ENCODE measurements at regions of chr1 and their contacts with region 1.

Region 1: DNA sequence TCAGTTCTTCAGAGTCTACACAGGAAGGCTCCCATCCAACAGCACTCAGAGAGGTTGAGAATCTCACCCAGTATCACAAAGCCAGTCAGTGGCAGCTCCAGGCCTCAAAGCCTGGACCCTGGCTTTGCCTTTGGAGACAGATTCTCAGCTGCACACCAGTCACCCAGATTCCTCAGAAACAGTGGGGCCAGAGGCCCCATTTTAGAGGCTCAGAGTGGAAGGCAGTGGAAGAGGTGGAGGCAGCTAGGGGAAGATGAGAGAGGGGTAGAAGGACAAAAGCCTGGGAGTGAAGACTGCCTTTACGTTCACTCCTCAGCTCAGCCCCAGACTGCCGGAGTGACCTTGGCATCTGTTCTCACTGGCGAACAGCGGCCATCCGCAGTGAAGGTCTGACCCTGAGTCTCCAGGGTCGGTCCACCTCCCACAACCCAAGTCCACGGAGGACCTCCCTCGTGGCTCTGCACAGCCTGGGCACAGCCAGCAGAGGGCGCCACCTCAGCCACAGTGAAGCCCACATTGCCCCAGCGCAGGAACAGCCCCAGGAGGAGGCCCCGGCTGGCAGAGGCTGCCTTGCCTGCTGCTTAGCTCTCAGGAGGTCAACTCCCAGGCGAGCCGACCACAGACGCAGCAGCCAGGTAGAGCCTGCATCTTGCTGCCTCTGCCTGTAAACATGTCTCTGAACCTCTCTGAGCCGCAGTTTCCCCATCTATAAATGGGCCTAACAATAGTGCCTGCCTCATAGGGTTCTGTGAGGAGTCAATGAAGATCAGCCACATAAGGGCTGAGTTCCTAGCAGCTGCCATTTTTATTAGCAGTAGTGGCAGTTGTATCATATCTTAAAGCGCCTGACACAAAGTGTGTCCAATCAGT is 5.9 kb upstream of the FNDC5 start:
- DNase-seq: no peak
- ATAC-seq: peak; percentile 90
- H3K4me3 ChIP-seq: no peak overlapping the region
- H3K27ac ChIP-seq: no peak overlapping the region
- H3K4me1 ChIP-seq: peaks cover 10% of the 10 kb centered on the region
- H3K27me3 ChIP-seq: peaks cover 5% of the 10 kb centered on the region in 2 experiments; a peak in 2 of 4 replicates
- CTCF ChIP-seq: peak; percentile 79 to 98 (median 95)
- EP300 ChIP-seq: no peak
- POLR2A ChIP-seq: no peak
- RAD21 ChIP-seq: peak; percentile 51; the same call in 1 of the 2 replicates

Region 2: GRCh38 chr1:32431736-32432400 is 444.7 kb before region 1 on chr1:
- CTCF ChIA-PET with region 1: no interaction called
- POLR2A ChIA-PET with region 1: no interaction called
- RAD21 ChIA-PET with region 1: no interaction called
- SMC1A ChIA-PET with region 1: no interaction called
- in situ Hi-C with region 1: no loop called
- intact Hi-C with region 1: no loop called
- DNase-seq: peak; percentile 55
- ATAC-seq: peak; percentile 99
- H3K4me3 ChIP-seq: no peak overlapping the region
- H3K27ac ChIP-seq: 0 out of 2 replicates have a peak overlapping the region, but pooled peaks have one; percentile 50
- H3K4me1 ChIP-seq: peaks cover 4% of the 10 kb centered on the region
- H3K27me3 ChIP-seq: no peaks in the 10 kb centered on the region; a peak in 1 of 4 replicates
- CTCF ChIP-seq: no peak
- EP300 ChIP-seq: no peak
- POLR2A ChIP-seq: no peak
- RAD21 ChIP-seq: no peak

Region 3: GRCh38 chr1:32716312-32717148 is 160.0 kb before region 1 on chr1:
- CTCF ChIA-PET with region 1: interaction called, 57 read pairs
- POLR2A ChIA-PET with region 1: interaction called, 4 read pairs
- RAD21 ChIA-PET with region 1: interaction called, 34 read pairs
- SMC1A ChIA-PET with region 1: interaction called, 16 read pairs
- in situ Hi-C with region 1: no loop called
- intact Hi-C with region 1: loop called (anchors 1 kb)
- DNase-seq: no peak
- ATAC-seq: peak; percentile 87
- H3K4me3 ChIP-seq: no peak overlapping the region
- H3K27ac ChIP-seq: no peak overlapping the region
- H3K4me1 ChIP-seq: 0 out of 2 replicates have a peak, but pooled peaks cover 4% of the 10 kb centered on the region
- H3K27me3 ChIP-seq: no peaks in the 10 kb centered on the region
- CTCF ChIP-seq: no peak
- EP300 ChIP-seq: no peak
- POLR2A ChIP-seq: no peak
- RAD21 ChIP-seq: no peak

Region 4: GRCh38 chr1:32828341-32828740 is 48.2 kb before region 1 on chr1:
- CTCF ChIA-PET with region 1: interaction called, 23 read pairs
- POLR2A ChIA-PET with region 1: no interaction called
- RAD21 ChIA-PET with region 1: no interaction called
- SMC1A ChIA-PET with region 1: interaction called, 4 read pairs
- in situ Hi-C with region 1: no loop called
- intact Hi-C with region 1: no loop called
- DNase-seq: no peak
- ATAC-seq: no peak
- H3K4me3 ChIP-seq: no peak overlapping the region
- H3K27ac ChIP-seq: no peak overlapping the region
- H3K4me1 ChIP-seq: no peaks in the 10 kb centered on the region
- H3K27me3 ChIP-seq: no peaks in the 10 kb centered on the region
- CTCF ChIP-seq: peak in 1 of 3 experiments; percentile 20; a peak in 1 of 6 replicates
- EP300 ChIP-seq: no peak
- POLR2A ChIP-seq: no peak
- RAD21 ChIP-seq: 0 out of 2 replicates have a peak, but pooled peaks have one; percentile 18

Region 5: GRCh38 chr1:32861904-32862695 is 14.5 kb before region 1 on chr1:
- CTCF ChIA-PET with region 1: interaction called, 37 read pairs
- POLR2A ChIA-PET with region 1: interaction called, 3 read pairs
- RAD21 ChIA-PET with region 1: no interaction called
- SMC1A ChIA-PET with region 1: interaction called, 13 read pairs
- in situ Hi-C with region 1: no loop called
- intact Hi-C with region 1: no loop called
- DNase-seq: no peak
- ATAC-seq: no peak
- H3K4me3 ChIP-seq: no peak overlapping the region
- H3K27ac ChIP-seq: no peak overlapping the region
- H3K4me1 ChIP-seq: no peaks in the 10 kb centered on the region
- H3K27me3 ChIP-seq: no peaks in the 10 kb centered on the region
- CTCF ChIP-seq: no peak
- EP300 ChIP-seq: no peak
- POLR2A ChIP-seq: no peak
- RAD21 ChIP-seq: no peak

Region 6: DNA sequence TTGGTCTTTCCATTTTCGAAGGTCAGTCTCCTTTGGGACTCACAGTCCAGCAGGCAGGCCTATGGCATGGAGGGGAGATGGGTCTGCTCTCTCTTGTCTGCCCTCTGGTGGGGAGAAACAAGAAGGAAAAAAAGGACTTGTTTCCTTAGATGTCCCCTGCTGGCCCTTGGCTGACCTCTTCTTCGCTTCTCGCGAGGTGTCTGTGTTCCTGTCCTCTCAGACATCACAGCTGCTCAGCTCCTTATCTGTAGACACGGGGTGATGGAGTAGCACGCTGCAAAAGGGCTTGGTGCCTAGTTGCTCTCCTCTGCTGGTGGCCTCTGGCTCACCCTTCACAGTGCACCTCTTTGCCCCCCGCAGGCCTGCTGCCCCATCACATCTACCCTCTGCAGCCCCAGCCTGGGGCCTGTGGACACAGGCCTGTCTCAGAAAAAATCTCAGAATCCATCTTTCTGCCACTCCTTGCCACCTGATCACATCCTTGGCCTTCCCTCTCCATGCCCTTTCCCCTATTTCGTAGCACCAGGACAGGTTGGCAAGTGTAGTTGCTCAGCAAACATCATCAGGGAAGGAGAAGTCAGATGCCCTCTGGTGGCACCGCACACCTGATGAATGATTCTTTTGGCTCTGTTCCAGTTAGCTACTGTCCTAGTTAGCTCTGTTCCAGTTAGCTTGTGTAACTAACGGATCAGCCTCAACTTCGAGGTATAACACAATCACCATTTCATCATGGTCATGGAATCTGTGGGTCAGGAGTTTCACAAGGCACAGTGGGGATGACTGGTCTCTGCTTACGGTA is 178.8 kb after region 1 on chr1:
- CTCF ChIA-PET with region 1: interaction called, 19 read pairs
- POLR2A ChIA-PET with region 1: no interaction called
- RAD21 ChIA-PET with region 1: interaction called, 3 read pairs
- SMC1A ChIA-PET with region 1: interaction called, 5 read pairs
- in situ Hi-C with region 1: no loop called
- intact Hi-C with region 1: no loop called
- DNase-seq: peak; percentile 15
- ATAC-seq: peak; percentile 91
- H3K4me3 ChIP-seq: no peak overlapping the region
- H3K27ac ChIP-seq: no peak overlapping the region
- H3K4me1 ChIP-seq: peaks cover 9% of the 10 kb centered on the region
- H3K27me3 ChIP-seq: no peaks in the 10 kb centered on the region
- CTCF ChIP-seq: peak; percentile 67 to 74 (median 74)
- EP300 ChIP-seq: no peak
- POLR2A ChIP-seq: no peak
- RAD21 ChIP-seq: peak; percentile 64

Region 7: DNA sequence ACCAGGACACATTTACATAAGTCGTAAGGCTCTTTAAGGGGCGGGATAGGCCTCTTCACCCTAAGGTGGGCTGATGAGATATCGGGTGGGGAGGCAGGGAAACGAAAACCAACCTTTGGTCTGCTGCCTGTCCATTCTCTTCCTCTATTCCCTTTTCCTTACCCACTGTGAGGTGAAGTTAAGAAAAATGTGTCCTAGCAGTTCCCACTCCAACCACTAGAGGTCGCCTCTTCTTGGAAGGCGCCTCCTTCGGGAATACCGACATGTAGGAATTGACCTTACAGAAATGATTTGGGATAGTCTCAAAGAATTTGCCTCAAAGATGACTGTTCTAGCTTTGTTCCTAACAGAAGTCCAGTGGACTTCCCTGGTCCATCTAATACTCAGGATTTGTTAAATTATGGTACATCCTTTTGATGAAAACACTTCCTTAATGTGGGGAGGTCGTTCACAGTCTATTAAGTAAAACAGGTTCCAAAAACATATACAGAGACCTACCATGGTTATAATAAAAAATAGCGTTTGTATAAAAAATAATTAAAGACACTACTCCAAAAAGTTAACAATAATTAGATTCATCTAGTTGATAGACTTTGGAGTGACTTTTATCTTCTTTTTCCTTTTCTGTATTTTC is 218.5 kb after region 1 on chr1:
- CTCF ChIA-PET with region 1: interaction called, 11 read pairs
- POLR2A ChIA-PET with region 1: no interaction called
- RAD21 ChIA-PET with region 1: no interaction called
- SMC1A ChIA-PET with region 1: interaction called, 3 read pairs
- in situ Hi-C with region 1: no loop called
- intact Hi-C with region 1: no loop called
- DNase-seq: no peak
- ATAC-seq: no peak
- H3K4me3 ChIP-seq: no peak overlapping the region
- H3K27ac ChIP-seq: no peak overlapping the region
- H3K4me1 ChIP-seq: peaks cover 6% of the 10 kb centered on the region; the same call in 1 of the 2 replicates
- H3K27me3 ChIP-seq: no peaks in the 10 kb centered on the region
- CTCF ChIP-seq: peak; percentile 83 to 99 (median 96)
- EP300 ChIP-seq: no peak
- POLR2A ChIP-seq: no peak
- RAD21 ChIP-seq: peak; percentile 49

Measured in GM12878 (cell line).